ENCODE measurements at regions of chr9 and their contacts with region 1.

Region 1: DNA sequence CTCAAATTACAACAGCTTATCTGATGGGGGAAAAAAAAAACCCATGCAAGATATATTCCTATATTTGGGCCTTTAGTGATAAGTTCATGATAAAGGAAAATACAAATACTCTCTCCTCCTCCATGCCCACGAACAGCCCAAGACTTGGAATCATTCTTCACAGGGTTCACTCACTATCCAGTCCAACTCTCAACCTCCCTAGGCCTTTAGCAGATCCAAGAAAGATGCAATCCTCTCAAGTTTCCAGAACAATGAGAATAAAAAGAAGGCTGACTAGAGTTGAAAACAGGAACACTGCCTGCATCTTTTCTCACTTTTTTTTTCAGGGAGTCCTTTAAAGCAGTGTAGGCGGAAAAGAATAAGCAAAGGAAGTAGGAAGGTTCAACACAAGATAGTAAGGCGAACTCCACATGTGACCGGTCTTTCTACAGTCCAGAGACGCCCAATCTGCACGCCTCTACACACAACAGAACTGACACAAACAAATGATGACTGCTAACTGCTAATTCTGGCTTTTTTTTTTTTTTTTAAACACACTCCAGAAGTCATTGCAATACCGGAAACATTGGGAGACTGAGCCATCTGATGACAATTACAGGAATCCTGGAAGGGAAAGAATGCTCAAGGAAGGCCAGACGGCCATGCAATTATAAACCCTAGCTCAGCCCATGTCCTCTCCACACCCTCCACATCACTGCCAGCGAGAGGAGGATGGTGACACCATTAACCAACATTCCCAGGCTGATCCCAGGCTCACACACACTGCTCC is 75.4 kb downstream of the BNC2 start:
- DNase-seq: peak; percentile 61 to 74
- ATAC-seq: peak; percentile 60 to 91 (median 88)
- H3K4me3 ChIP-seq: no peak overlapping the region
- H3K27ac ChIP-seq: peak overlapping the region; percentile 2
- H3K4me1 ChIP-seq: peaks cover 5% of the 10 kb centered on the region
- H3K27me3 ChIP-seq: no peaks in the 10 kb centered on the region
- CTCF ChIP-seq: no peak

Region 2: DNA sequence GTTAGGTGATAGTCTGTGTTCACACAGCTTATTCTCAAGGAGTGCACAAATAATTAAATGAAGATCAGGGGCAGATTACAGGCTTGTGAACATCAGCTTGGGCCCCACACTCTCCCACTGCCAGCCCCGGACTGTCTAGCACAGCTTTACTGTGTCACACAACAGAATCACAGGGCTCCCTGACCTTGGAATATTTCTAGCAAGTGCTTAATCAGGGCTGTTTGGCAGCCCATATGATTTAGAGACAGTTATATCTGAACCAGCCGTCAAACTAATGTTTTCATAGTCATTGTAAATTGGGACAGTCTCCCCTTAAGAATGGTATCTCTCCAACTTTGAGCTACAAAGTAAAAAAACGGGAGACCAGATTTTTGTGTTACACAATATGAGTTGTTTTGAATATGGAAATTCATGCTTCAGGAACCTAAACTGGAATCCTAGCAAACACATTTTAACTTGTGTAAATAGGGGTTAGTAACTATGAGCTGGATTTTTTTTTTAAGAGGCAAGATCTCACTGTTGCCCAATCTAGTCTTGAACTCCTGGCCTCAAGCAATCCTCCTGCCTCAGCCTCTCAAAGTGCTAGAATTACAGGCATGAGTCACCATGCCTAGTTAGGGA is 442.2 kb before region 1 on chr9:
- intact Hi-C with region 1: no loop called
- DNase-seq: no peak
- ATAC-seq: no peak
- H3K4me3 ChIP-seq: no peak overlapping the region
- H3K27ac ChIP-seq: no peak overlapping the region
- H3K4me1 ChIP-seq: no peaks in the 10 kb centered on the region
- H3K27me3 ChIP-seq: no peaks in the 10 kb centered on the region
- CTCF ChIP-seq: no peak

Region 3: DNA sequence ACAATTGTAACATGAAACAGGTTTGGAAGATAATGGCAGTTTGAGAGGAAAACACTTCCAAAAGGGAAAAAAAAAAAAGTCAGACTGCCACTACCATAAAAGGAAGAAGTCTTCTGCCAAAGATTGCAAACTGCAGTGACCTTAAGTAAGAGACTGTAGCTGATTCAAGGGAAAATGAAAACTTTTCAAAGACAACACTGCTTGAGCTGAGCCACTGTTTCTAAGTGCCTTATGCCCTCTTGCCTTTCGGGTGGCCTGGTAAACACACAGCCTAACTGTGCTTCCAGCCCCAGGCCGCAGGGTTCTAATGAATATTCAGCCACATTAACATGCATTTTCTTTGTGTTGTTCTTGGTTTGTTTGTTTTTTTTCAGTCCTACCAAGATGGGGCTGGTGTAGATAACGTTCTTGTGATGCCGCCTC is 279.2 kb before region 1 on chr9:
- intact Hi-C with region 1: no loop called
- DNase-seq: no peak
- ATAC-seq: peak in 2 of 4 donors; percentile 40 to 52
- H3K4me3 ChIP-seq: no peak overlapping the region
- H3K27ac ChIP-seq: no peak overlapping the region
- H3K4me1 ChIP-seq: peaks cover 3% of the 10 kb centered on the region
- H3K27me3 ChIP-seq: no peaks in the 10 kb centered on the region
- CTCF ChIP-seq: no peak

Region 4: DNA sequence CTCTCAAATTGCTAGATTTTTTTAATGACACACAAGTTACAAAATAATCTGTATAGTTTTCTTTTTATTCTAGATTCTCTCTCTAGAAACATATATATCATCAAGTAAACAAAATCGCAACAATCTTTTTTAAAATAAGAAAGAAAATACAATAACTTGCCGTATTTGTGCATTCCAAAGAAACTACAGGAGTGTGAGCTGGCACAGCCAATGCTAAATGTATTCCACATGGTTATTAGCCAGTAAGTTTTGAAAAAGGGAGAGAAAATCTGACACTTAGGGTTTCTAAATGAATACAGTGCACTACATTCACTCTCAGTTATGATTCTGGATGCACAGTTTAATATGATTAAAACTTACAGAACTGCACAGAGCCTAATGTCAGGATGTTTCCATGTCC is 42.5 kb before region 1 on chr9:
- intact Hi-C with region 1: loop called in 1 of 2 experiments (anchors 5 kb)
- DNase-seq: no peak
- ATAC-seq: no peak
- H3K4me3 ChIP-seq: no peak overlapping the region
- H3K27ac ChIP-seq: no peak overlapping the region
- H3K4me1 ChIP-seq: no peaks in the 10 kb centered on the region
- H3K27me3 ChIP-seq: no peaks in the 10 kb centered on the region
- CTCF ChIP-seq: no peak

Region 5: DNA sequence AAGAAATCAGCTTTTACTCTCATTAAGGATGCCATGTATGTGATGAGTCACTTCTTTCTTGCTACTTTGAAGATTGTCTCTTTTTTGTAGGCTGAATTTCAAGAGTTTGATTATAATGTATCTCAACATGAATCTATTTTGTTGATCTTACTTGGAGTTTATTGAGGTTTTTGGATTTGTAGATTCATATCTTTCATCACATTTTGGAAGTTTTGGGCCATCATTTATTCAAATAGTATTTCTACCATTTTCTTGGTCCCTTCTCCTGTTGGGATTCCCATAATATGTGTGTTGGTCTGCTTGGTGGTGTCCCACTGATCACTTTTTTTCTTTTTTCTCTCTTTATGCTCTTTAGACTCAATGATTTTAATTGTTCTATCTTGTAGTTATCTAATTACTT is 456.0 kb after region 1 on chr9:
- intact Hi-C with region 1: no loop called
- DNase-seq: no peak
- ATAC-seq: no peak
- H3K4me3 ChIP-seq: no peak overlapping the region
- H3K27ac ChIP-seq: no peak overlapping the region
- H3K4me1 ChIP-seq: no peaks in the 10 kb centered on the region
- H3K27me3 ChIP-seq: no peaks in the 10 kb centered on the region
- CTCF ChIP-seq: no peak